Transverse colon (tissue), 4 donors: ENCODE measurements at regions of chr2 and their contacts with region 1.

Region 1: DNA sequence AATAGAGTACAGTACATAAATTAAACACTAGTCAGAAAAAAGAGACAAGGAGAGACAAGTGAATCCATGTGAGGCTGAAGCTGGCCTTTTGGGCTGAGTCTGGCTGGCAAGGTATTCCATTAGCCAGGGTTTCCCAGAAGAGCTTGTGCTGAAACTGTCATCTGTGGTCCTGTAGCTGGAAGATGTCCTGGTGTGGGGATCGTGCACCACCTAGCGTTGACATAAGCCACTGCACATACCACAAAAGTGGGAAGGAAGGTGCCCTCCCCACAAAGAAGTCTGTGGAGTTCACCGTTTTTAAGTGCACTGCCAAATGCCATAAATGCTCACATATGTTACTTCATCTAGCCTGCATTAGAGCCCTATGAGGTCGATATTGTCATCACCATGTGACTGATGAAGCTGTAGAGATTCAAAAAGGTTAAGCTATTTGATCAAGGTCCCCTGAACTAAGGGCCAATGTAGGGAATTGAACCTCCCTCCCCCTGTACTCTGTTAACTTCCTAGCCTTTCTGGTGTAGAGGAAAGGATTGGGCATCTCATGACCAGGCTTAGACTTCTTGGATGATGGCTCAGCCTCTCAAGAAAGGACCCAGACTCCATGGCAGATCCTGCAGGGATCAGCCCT is 31.9 kb upstream of the GALNT14 start:
- DNase-seq: peak; percentile 47
- H3K4me3 ChIP-seq: no peak overlapping the region
- H3K27ac ChIP-seq: no peak overlapping the region
- H3K4me1 ChIP-seq: no peaks in the 10 kb centered on the region
- H3K27me3 ChIP-seq: no peaks in the 10 kb centered on the region
- CTCF ChIP-seq: peak; percentile 80 to 88 (median 85)
- EP300 ChIP-seq: no peak
- POLR2A ChIP-seq: no peak

Region 2: DNA sequence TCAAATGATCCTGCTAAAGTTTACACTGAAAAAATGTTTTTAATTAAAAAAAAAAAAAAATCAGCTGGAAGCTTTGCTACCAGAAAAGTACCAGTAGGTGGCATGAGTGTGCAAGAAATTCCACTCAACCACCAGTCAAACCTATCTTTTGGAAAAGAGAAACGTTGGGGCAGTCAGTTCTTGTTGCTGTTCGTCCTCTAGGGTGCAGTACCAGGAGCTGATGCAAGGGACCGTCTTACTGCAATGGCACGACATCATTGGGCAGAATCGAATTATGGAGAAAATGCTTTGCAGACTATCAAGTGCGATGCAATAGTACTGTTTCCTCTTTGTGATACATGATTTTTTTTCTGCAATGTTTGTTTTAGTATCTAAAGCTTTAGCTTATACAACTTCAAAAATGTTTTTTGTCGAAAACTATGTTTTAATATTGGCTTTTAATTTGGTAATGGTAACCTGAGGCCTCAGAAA is 1005.1 kb before region 1 on chr2:
- in situ Hi-C with region 1: loop called in 2 of 4 experiments (anchors 25 kb)
- intact Hi-C with region 1: no loop called
- DNase-seq: peak; percentile 46
- H3K4me3 ChIP-seq: no peak overlapping the region
- H3K27ac ChIP-seq: no peak overlapping the region
- H3K4me1 ChIP-seq: peaks cover 0 to 13% (median 2%) of the 10 kb centered on the region in 4 donors
- H3K27me3 ChIP-seq: no peaks in the 10 kb centered on the region
- CTCF ChIP-seq: peak; percentile 84 to 94 (median 87)
- EP300 ChIP-seq: no peak
- POLR2A ChIP-seq: no peak

Region 3: DNA sequence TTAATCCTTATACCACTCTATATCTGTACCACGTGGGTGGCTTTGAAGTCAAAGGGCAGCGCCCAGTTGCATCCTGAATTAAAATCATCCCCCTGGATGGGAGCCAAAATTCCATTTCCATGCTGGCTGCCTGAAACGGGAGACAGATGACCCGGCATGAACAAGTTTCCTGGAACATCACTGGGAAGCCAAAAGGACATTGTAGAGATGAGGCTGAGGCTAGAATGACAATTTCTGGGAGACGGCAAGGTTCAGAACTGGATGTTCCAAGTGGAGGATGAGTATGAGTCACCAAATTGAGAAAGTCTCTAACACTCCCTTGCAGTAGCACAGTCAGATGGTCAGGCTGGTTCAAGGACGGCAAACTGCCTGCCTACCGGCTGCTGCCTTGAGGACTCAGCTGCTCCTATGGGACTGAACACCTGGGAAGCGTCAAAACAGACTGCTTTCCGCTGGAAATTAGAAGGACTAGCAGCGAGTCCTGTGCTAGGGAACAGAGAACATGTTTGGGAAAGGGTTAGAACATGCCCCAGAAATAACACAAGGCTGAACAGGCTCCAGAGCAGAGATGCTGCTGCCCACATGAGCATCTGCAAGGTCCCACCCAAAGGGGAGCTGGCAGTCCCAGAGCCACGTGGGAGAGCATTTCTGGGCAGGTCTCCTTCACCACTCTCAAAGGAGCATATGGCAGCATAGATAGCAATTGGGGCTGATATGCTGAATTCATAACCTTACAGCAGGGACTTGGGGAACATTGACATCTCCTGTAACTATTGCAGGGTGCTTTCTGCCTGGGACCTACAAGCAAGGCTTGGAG is 991.4 kb before region 1 on chr2:
- in situ Hi-C with region 1: loop called in 3 of 4 experiments (anchors 25 kb)
- intact Hi-C with region 1: no loop called
- DNase-seq: peak; percentile 22
- H3K4me3 ChIP-seq: no peak overlapping the region
- H3K27ac ChIP-seq: peak overlapping the region; percentile 48 to 65 (median 52)
- H3K4me1 ChIP-seq: peaks cover 0 to 5% (median 0%) of the 10 kb centered on the region in 4 donors
- H3K27me3 ChIP-seq: no peaks in the 10 kb centered on the region
- CTCF ChIP-seq: no peak
- EP300 ChIP-seq: peak; percentile 68
- POLR2A ChIP-seq: no peak

Region 4: DNA sequence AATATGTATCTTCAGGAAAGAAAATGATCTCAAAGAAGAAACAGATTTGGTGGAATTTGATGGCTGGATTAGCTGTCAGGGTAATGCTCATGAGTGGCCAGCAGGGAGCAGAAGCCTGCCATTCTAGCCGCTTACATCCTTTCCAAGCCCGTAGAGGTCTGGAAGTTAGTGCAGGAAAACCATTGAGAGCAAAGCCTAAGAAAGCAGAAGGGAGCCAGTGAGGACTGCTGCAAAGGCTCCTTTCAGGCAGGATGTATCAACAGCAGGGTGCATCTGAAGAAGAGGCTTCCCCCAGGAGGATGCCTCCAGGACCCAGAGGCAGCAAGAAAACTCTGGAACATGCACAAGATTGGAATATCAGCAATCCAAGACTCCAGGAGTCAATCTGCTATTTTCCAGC is 961.7 kb before region 1 on chr2:
- in situ Hi-C with region 1: loop called in 1 of 4 experiments (anchors 25 kb)
- intact Hi-C with region 1: no loop called
- DNase-seq: peak; percentile 64
- H3K4me3 ChIP-seq: no peak overlapping the region
- H3K27ac ChIP-seq: no peak overlapping the region
- H3K4me1 ChIP-seq: peaks cover 0 to 4% (median 4%) of the 10 kb centered on the region in 4 donors
- H3K27me3 ChIP-seq: no peaks in the 10 kb centered on the region
- CTCF ChIP-seq: peak; percentile 87 to 92 (median 90)
- EP300 ChIP-seq: no peak
- POLR2A ChIP-seq: no peak

Region 5: DNA sequence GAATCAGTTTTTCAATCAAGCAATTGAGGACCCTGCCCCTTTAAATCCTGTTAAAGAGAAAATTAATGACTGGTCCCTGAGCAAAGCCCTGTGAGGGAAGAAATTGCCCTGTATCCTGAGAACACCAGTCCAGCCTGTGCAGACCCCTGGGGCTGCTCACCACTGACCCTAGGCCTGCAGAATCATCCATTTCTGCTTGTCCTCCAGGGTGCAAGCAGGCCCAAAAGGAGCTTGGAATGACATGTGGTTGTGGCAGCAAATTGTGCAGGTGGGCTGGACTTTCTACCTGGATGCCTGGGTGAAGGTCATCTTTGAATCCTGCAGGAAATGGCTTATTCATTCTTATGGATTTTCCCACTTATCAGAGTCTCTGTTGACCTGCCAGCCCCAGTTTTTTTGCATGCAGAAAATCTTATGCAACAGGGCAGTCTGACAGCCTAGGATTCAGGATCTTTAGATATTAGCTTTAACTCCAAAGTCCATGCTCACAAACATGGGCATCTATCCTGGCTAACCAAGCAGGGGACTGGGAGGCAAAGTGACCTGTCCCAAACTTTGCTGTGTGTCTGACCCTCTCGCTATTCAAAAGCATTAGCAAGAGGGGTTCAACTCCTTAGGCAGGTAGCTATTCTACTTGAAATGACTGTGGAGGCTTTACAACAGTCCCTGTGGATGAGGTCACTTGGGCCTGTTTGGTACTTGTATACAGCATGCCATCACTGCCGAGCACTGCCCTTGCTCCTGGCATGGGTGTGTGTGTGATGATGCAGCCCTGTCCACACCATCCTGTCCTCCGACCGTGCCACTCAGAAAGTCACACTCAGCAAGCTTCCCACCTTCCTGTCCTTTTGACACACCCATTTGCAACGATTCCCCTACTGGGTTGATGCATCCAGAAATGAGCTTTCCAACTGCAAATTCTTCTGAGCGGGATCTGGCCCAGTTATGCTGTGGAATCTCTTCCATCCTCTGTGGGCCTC is 448.2 kb before region 1 on chr2:
- in situ Hi-C with region 1: loop called (anchors 10 kb)
- intact Hi-C with region 1: no loop called
- DNase-seq: no peak
- H3K4me3 ChIP-seq: no peak overlapping the region
- H3K27ac ChIP-seq: no peak overlapping the region
- H3K4me1 ChIP-seq: no peaks in the 10 kb centered on the region
- H3K27me3 ChIP-seq: peaks cover 9% of the 10 kb centered on the region
- CTCF ChIP-seq: no peak
- EP300 ChIP-seq: no peak
- POLR2A ChIP-seq: no peak

Region 6: GRCh38 chr2:31333527-31334183 is 163.5 kb after region 1 on chr2:
- in situ Hi-C with region 1: loop called in 1 of 4 experiments (anchors 25 kb)
- intact Hi-C with region 1: no loop called
- DNase-seq: peak; percentile 83
- H3K4me3 ChIP-seq: no peak overlapping the region
- H3K27ac ChIP-seq: no peak overlapping the region
- H3K4me1 ChIP-seq: no peaks in the 10 kb centered on the region
- H3K27me3 ChIP-seq: no peaks in the 10 kb centered on the region
- CTCF ChIP-seq: peak; percentile 83 to 90 (median 84)
- EP300 ChIP-seq: no peak
- POLR2A ChIP-seq: no peak